Natural killer cell (primary cell): ENCODE measurements at regions of chr2 and their contacts with region 1.

Region 1: DNA sequence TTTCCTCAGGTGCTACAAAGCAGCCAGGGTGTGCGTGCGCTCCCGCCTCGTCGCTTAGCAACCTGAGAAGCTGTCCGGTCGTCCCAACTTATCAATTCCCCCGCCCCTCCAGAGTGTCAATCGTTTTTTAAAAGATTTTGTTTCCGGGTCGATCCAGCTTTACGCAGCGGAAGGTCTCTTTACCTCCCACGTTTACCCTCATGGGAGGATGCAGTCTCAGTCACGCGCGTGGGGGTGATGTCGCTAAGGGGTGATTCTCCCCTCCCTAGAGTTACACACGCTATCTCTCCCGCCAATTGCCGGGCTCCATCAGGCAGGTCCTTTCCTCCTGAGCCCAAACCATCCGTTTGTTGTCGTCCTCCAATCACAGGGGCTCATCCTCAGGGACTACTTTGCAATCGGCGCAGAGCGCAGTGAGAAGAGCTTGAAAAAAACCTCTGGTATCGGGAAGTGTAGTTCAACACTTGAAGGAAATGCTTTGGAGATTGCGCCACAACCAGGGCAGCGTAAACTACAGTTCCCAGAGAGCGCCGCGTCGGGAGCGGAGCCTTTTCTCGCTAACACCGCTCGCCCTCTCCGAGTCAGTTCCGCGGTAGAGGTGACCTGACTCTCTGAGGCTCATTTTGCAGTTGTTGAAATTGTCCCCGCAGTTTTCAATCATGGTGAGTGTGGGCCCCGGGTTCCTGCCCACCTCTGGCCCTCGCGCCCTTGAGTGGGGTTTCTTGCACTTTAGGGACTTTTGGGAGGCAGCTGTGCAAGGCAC is at the starts of genes MDH1 and WDPCP:
- DNase-seq: peak; percentile 83 to 98
- ATAC-seq: peak; percentile 84 to 95 (median 85)
- H3K4me3 ChIP-seq: peak within 1 kb of the TSS; percentile 76
- H3K4me3 Mint-ChIP-seq: peak within 1 kb of the TSS; percentile 100
- H3K27ac ChIP-seq: peak within 1 kb of the TSS; percentile 73
- H3K27ac Mint-ChIP-seq: peak within 1 kb of the TSS; percentile 98 to 99
- H3K4me1 ChIP-seq: peaks cover 8% of the 10 kb centered on the region
- H3K4me1 Mint-ChIP-seq: peaks cover 47 to 49% of the 10 kb centered on the region in 2 donors
- H3K27me3 ChIP-seq: no peaks in the 10 kb centered on the region
- H3K27me3 Mint-ChIP-seq: no peaks in the 10 kb centered on the region
- CTCF ChIP-seq: no peak
- total RNA-seq, gene MDH1: 62.0 to 85.3 (median 71.3) TPM
- total RNA-seq, gene WDPCP: 22.0 to 23.7 (median 22.9) TPM

Region 2: DNA sequence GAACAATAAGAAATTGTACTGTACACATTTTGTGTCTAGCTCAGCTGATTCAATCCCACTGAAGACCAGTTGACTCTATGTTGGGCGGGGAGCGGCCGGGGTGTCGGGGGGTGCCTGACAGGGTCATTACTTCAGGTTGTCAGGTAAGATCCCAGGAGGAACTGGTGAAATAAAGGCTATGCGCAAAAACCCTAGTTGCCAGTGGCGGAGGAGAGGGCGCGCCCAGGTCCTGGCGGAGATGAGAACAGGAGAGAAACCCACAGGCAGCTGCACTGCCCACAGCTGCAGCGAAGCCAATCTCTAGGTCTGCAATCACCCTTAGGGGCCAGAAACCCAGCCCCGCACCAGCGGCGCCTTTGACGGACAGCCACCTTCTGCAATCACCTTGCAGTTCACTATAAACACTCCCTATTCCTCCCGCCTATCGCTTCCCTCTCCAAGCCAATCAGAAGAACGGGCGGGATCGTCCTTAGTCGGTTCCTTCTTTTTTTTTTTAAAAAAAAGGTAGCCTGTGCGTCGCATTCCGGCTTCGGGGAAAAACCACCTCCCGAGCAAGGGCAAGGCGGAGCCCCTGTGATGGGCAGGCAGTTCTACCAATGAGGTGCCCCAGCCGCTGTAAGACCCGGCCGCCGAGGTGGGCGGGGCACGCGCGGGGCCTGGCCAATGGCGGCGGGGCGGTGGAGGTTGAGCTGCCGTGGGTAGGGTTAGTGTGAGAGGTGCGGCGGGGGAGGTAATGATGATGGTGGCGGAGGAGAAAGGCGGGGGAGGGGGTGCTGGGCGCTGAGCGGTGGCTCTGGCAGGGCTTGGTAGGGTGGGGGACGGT is 883.3 kb before region 1 on chr2 and contains the start of gene EHBP1:
- intact Hi-C with region 1: loop called (anchors 10 kb)
- DNase-seq: peak; percentile 97 to 98
- ATAC-seq: peak; percentile 96 to 99 (median 96)
- H3K4me3 ChIP-seq: peak within 1 kb of the TSS; percentile 59
- H3K4me3 Mint-ChIP-seq: peak within 1 kb of the TSS; percentile 91
- H3K27ac ChIP-seq: peak within 1 kb of the TSS; percentile 29
- H3K27ac Mint-ChIP-seq: peak within 1 kb of the TSS; percentile 60 to 90
- H3K4me1 ChIP-seq: peaks cover 15% of the 10 kb centered on the region
- H3K4me1 Mint-ChIP-seq: peaks cover 30 to 38% of the 10 kb centered on the region in 2 donors
- H3K27me3 ChIP-seq: no peaks in the 10 kb centered on the region
- H3K27me3 Mint-ChIP-seq: no peaks in the 10 kb centered on the region
- CTCF ChIP-seq: no peak
- total RNA-seq, gene EHBP1: 22.4 to 33.4 (median 28.3) TPM

Region 3: GRCh38 chr2:63514781-63515180 is 73.8 kb before region 1 on chr2:
- intact Hi-C with region 1: no loop called
- DNase-seq: no peak
- ATAC-seq: no peak
- H3K4me3 ChIP-seq: no peak overlapping the region
- H3K4me3 Mint-ChIP-seq: no peak overlapping the region
- H3K27ac ChIP-seq: no peak overlapping the region
- H3K27ac Mint-ChIP-seq: no peak overlapping the region
- H3K4me1 ChIP-seq: no peaks in the 10 kb centered on the region
- H3K4me1 Mint-ChIP-seq: peaks cover 0 to 3% of the 10 kb centered on the region in 2 donors
- H3K27me3 ChIP-seq: no peaks in the 10 kb centered on the region
- H3K27me3 Mint-ChIP-seq: no peaks in the 10 kb centered on the region
- CTCF ChIP-seq: no peak

Region 4: GRCh38 chr2:63553049-63553448 is 35.5 kb before region 1 on chr2:
- intact Hi-C with region 1: no loop called
- DNase-seq: no peak
- ATAC-seq: no peak
- H3K4me3 ChIP-seq: no peak overlapping the region
- H3K4me3 Mint-ChIP-seq: no peak overlapping the region
- H3K27ac ChIP-seq: no peak overlapping the region
- H3K27ac Mint-ChIP-seq: no peak overlapping the region
- H3K4me1 ChIP-seq: no peaks in the 10 kb centered on the region
- H3K4me1 Mint-ChIP-seq: peaks cover 13 to 31% of the 10 kb centered on the region in 2 donors
- H3K27me3 ChIP-seq: no peaks in the 10 kb centered on the region
- H3K27me3 Mint-ChIP-seq: no peaks in the 10 kb centered on the region
- CTCF ChIP-seq: no peak

Region 5: GRCh38 chr2:63841254-63842022 is 252.9 kb after region 1 on chr2 and contains the start of gene UGP2:
- intact Hi-C with region 1: loop called (anchors 1 kb)
- DNase-seq: peak; percentile 85 to 89
- ATAC-seq: peak; percentile 74 to 85 (median 74)
- H3K4me3 ChIP-seq: peak within 1 kb of the TSS; percentile 77
- H3K4me3 Mint-ChIP-seq: peak within 1 kb of the TSS; percentile 97
- H3K27ac ChIP-seq: peak within 1 kb of the TSS; percentile 89
- H3K27ac Mint-ChIP-seq: peak within 1 kb of the TSS; percentile 90 to 97
- H3K4me1 ChIP-seq: peaks cover 12% of the 10 kb centered on the region
- H3K4me1 Mint-ChIP-seq: peaks cover 45 to 59% of the 10 kb centered on the region in 2 donors
- H3K27me3 ChIP-seq: no peaks in the 10 kb centered on the region
- H3K27me3 Mint-ChIP-seq: no peaks in the 10 kb centered on the region
- CTCF ChIP-seq: no peak
- total RNA-seq, gene UGP2: 100 to 117 (median 101) TPM

Region 6: GRCh38 chr2:63888490-63889402 is 300.2 kb after region 1 on chr2:
- intact Hi-C with region 1: loop called (anchors 2 kb)
- DNase-seq: peak; percentile 27 to 67
- ATAC-seq: peak; percentile 57 to 89 (median 69)
- H3K4me3 ChIP-seq: no peak overlapping the region
- H3K4me3 Mint-ChIP-seq: no peak overlapping the region
- H3K27ac ChIP-seq: no peak overlapping the region
- H3K27ac Mint-ChIP-seq: peak overlapping the region; percentile 2 to 61
- H3K4me1 ChIP-seq: no peaks in the 10 kb centered on the region
- H3K4me1 Mint-ChIP-seq: peaks cover 7 to 9% of the 10 kb centered on the region in 2 donors
- H3K27me3 ChIP-seq: no peaks in the 10 kb centered on the region
- H3K27me3 Mint-ChIP-seq: no peaks in the 10 kb centered on the region
- CTCF ChIP-seq: peak; percentile 74

Region 7: DNA sequence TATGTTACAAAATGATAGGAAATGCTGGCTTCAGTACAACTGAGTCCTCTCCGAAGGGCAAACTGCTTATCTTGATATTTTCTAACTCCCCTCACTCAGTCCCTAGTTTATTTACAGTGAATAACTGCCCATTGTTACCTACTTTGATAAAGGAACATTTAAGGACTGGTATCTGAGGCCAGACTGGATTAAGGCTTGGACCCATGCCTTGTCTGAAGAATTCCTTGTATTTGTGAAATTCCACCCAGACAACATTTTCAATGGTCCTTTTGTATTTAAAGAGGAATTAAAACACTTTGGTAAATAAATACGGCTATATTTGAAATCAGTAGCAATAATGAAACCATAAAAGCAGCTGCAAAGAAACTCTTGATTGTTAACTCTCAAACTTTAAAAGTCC is 497.4 kb after region 1 on chr2:
- intact Hi-C with region 1: no loop called
- DNase-seq: no peak
- ATAC-seq: no peak
- H3K4me3 ChIP-seq: no peak overlapping the region
- H3K4me3 Mint-ChIP-seq: no peak overlapping the region
- H3K27ac ChIP-seq: no peak overlapping the region
- H3K27ac Mint-ChIP-seq: no peak overlapping the region
- H3K4me1 ChIP-seq: no peaks in the 10 kb centered on the region
- H3K4me1 Mint-ChIP-seq: no peaks in the 10 kb centered on the region
- H3K27me3 ChIP-seq: no peaks in the 10 kb centered on the region
- H3K27me3 Mint-ChIP-seq: peaks cover 6 to 8% of the 10 kb centered on the region in 2 donors
- CTCF ChIP-seq: no peak

Region 8: GRCh38 chr2:64144057-64145013 is 555.8 kb after region 1 on chr2 and contains the start of gene PELI1:
- intact Hi-C with region 1: loop called (anchors 2 kb)
- DNase-seq: peak; percentile 81 to 95
- ATAC-seq: peak; percentile 96 to 99 (median 97)
- H3K4me3 ChIP-seq: peak within 1 kb of the TSS; percentile 77
- H3K4me3 Mint-ChIP-seq: peak within 1 kb of the TSS; percentile 97
- H3K27ac ChIP-seq: peak within 1 kb of the TSS; percentile 85
- H3K27ac Mint-ChIP-seq: peak within 1 kb of the TSS; percentile 89 to 95
- H3K4me1 ChIP-seq: peaks cover 3% of the 10 kb centered on the region
- H3K4me1 Mint-ChIP-seq: peaks cover 21 to 31% of the 10 kb centered on the region in 2 donors
- H3K27me3 ChIP-seq: no peaks in the 10 kb centered on the region
- H3K27me3 Mint-ChIP-seq: no peaks in the 10 kb centered on the region
- CTCF ChIP-seq: peak; percentile 36
- total RNA-seq, gene PELI1: 42.3 to 141 (median 65.0) TPM

Region 9: GRCh38 chr2:65129826-65130663 is 1541.5 kb after region 1 on chr2 and contains the start of gene RAB1A:
- intact Hi-C with region 1: loop called (anchors 2 kb)
- DNase-seq: peak; percentile 95 to 100
- ATAC-seq: peak; percentile 87 to 96 (median 87)
- H3K4me3 ChIP-seq: peak within 1 kb of the TSS; percentile 84
- H3K4me3 Mint-ChIP-seq: peak within 1 kb of the TSS; percentile 100
- H3K27ac ChIP-seq: peak within 1 kb of the TSS; percentile 94
- H3K27ac Mint-ChIP-seq: peak within 1 kb of the TSS; percentile 99
- H3K4me1 ChIP-seq: peaks cover 30% of the 10 kb centered on the region
- H3K4me1 Mint-ChIP-seq: peaks cover 38 to 47% of the 10 kb centered on the region in 2 donors
- H3K27me3 ChIP-seq: no peaks in the 10 kb centered on the region
- H3K27me3 Mint-ChIP-seq: no peaks in the 10 kb centered on the region
- CTCF ChIP-seq: peak; percentile 9
- total RNA-seq, gene RAB1A: 83.5 to 101 (median 93.6) TPM